T-cell (primary cell): ENCODE measurements at regions of chr4 and their contacts with region 1.

Region 1: GRCh38 chr4:161291222-161291621 is 872.6 kb downstream of the FSTL5 start:
- DNase-seq: peak in 1 of 35 experiments; percentile 0
- ATAC-seq: no peak
- H3K4me3 ChIP-seq: no peak overlapping the region
- H3K4me3 Mint-ChIP-seq: no peak overlapping the region
- H3K27ac ChIP-seq: no peak overlapping the region
- H3K27ac Mint-ChIP-seq: no peak overlapping the region
- H3K4me1 ChIP-seq: no peaks in the 10 kb centered on the region
- H3K4me1 Mint-ChIP-seq: no peaks in the 10 kb centered on the region
- H3K27me3 ChIP-seq: no peaks in the 10 kb centered on the region
- H3K27me3 Mint-ChIP-seq: no peaks in the 10 kb centered on the region

Region 2: GRCh38 chr4:161279095-161279494 is 12.1 kb before region 1 on chr4:
- CTCF ChIA-PET with region 1: no interaction called
- POLR2A ChIA-PET with region 1: interaction called in 1 of 2 experiments, 10 read pairs
- DNase-seq: no peak
- ATAC-seq: no peak
- H3K4me3 ChIP-seq: no peak overlapping the region
- H3K4me3 Mint-ChIP-seq: no peak overlapping the region
- H3K27ac ChIP-seq: no peak overlapping the region
- H3K27ac Mint-ChIP-seq: no peak overlapping the region
- H3K4me1 ChIP-seq: no peaks in the 10 kb centered on the region
- H3K4me1 Mint-ChIP-seq: no peaks in the 10 kb centered on the region
- H3K27me3 ChIP-seq: no peaks in the 10 kb centered on the region
- H3K27me3 Mint-ChIP-seq: no peaks in the 10 kb centered on the region